Right ventricle myocardium inferior (tissue), 1 donor: ENCODE measurements at regions of chr14 and their contacts with region 1.

Region 1: GRCh38 chr14:102096214-102097114 is 9.6 kb upstream of the HSP90AA1 start:
- DNase-seq: peak; percentile 93
- ATAC-seq: peak; percentile 85

Region 2: DNA sequence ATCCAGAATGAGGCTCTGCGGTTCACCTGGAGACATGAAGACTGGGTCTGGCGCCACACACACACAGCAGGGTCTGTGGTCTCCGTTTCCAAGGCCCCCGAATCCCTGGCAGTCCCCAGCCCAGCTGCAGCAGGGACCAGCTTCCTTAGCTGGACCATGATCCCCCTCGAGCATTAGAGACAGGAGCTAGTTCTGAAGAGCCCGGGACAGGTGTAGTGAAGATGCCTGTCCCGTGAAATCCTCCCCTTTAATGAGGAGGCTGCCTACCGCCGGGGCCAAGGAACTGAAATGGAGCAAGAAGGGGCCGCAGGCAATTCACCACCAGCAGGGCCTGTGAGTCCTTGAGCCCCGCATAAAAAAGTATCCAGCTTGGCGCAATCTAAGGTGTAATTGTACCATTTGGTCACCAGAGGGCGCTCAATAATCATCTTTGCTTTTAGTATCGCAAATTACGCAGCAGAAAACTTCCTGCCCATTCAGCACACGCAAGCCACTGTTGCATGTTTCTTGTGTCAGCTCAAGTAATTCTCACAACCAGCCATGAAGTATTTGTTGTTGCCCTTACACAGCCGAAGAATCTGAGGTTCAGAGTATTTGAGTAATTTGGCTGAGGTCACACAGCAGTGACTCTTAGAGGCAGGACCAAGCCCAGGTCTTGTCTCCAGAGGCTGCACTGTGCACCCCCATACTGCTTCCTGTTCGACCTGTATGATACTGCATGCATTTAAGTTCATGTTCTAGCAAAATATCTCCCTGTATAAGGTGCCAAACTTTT is 389.2 kb before region 1 on chr14:
- intact Hi-C with region 1: loop called (anchors 2 kb)
- DNase-seq: no peak
- ATAC-seq: peak; percentile 66

Region 3: DNA sequence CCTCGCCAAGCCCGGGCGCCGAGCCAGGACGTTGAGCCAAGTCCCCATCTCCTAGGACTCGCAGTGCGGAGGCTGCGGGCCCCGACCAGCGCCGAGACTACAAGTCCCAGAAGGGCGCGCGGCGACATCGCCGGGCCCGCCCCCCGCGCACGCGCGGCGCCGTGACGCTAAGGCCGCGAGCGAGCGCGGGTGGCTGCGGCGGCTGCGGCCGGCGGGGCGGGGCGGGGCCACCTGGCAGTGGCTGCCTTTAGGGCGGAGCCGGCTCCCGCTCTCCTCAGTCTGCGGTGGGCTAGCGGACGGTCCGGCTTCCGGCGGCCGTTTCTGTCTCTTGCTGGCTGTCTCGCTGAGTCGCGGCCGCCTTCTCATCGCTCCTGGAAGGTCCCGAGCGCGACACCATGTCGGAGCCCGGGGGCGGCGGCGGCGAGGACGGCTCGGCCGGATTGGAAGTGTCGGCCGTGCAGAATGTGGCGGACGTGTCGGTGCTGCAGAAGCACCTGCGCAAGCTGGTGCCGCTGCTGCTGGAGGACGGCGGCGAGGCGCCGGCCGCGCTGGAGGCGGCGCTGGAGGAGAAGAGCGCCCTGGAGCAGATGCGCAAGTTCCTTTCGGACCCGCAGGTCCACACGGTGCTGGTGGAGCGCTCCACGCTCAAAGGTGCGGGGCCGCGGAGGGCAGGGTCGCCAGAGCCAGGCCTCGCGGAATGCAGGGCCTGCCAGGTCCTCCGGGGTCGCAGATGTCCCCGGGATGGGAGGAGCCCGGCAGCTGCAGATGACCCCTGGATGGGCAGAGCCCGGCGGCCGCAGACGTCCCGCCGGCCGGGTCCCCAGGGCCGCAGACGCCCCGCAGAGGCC is 131.9 kb before region 1 on chr14 and contains the start of gene DYNC1H1:
- intact Hi-C with region 1: loop called (anchors 1 kb)
- DNase-seq: peak; percentile 98
- ATAC-seq: peak; percentile 93
- total RNA-seq, gene DYNC1H1: 348 TPM

Region 4: DNA sequence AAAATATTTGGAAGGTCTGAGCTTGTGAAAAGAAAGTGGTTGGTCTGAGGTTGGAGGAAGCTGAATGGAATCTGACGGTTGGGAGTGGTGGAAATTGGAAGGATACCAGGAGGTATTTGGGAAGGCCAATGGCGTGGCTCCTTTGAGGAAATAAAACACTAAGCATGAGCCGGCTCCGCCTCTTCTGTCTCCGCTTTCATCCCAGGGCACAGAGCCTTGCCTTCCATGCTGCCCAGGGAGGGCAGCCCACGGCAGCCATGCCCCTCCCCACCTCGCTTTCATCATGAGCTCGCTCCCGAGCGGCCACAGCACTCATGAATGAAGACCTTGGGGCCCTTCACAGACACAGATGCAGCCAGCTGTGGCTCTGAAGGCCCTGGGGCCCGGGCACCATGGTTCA is 45.8 kb before region 1 on chr14:
- intact Hi-C with region 1: no loop called
- DNase-seq: no peak
- ATAC-seq: no peak

Region 5: DNA sequence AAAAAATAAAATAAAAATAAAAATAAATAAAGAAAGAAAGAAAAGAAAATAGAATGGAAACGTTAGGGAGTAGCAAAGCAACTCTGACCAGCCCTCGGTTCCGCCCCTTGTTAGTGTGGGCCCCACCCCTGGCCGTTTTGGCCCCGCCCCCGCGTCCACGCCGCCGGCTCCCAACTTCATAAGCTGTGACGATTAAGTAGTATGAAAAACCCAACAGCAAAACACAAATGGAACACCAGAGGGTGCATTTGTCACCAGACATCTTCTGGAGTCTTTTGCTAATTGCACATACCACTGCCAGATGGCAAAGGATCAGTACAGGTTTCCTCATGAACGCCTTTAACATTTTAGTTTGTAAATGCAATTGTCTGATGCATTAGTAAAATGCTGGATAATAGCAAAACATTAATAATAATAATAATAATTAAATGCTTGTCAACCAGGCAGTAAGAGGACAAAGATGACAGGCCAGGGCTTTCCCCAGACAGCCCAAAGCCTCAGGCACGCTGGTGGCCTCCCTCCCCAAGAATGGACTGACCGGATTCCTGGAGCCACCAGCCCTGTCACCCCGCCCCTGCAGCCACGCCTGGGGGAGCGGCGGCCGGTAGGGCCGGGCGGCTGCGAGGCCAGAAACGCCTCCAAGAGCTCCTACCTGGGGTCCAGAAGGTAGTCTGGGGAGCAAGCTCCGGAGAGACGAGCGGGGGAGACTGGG is 33.2 kb before region 1 on chr14:
- intact Hi-C with region 1: loop called (anchors 2 kb)
- DNase-seq: peak; percentile 90
- ATAC-seq: peak; percentile 94